CD8-positive, alpha-beta T cell (primary cell): ENCODE measurements at regions of chr3 and their contacts with region 1.

Region 1: GRCh38 chr3:160003520-160004128 is 15.0 kb downstream of the IL12A start:
- DNase-seq: peak in 4 of 9 experiments; percentile 14 to 52 (median 33)
- ATAC-seq: no peak
- H3K4me3 ChIP-seq: no peak overlapping the region
- H3K4me3 Mint-ChIP-seq: no peak overlapping the region
- H3K27ac ChIP-seq: no peak overlapping the region
- H3K27ac Mint-ChIP-seq: no peak overlapping the region
- H3K4me1 ChIP-seq: no peaks in the 10 kb centered on the region
- H3K4me1 Mint-ChIP-seq: no peaks in the 10 kb centered on the region
- H3K27me3 ChIP-seq: no peaks in the 10 kb centered on the region
- H3K27me3 Mint-ChIP-seq: no peaks in the 10 kb centered on the region
- CTCF ChIP-seq: peak; percentile 20

Region 2: DNA sequence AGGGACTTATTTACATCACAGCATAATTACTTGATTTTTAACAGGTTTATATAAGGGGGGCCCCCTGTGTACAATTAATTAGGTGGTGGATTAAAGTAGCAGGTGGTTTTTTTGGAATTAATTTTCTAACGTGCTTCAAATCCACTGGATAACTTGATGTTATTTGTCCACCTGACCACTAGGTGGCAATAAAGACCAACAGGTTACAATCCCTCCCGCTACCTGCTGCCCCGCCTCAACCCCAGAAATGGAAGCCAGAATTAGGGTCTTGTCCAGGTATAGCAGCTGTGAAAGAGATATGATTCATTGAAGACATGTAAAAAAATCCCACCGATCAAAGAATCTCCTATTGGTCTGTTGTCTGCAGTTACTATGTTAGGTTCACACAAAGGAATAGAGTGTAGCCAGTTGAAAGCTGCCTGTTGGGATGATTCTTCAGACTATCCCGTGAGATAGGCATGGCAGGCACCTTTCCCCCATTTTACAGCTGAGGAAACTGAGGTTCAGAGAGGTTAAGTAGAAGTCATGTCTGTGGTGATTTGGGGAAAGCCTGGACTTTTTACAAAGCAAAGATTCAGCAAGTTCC is 1157.8 kb before region 1 on chr3:
- CTCF ChIA-PET with region 1: no interaction called
- POLR2A ChIA-PET with region 1: no interaction called
- intact Hi-C with region 1: loop called in 1 of 2 experiments (anchors 5 kb)
- DNase-seq: peak in 5 of 9 experiments; percentile 17 to 63 (median 28)
- ATAC-seq: peak; percentile 57
- H3K4me3 ChIP-seq: no peak overlapping the region
- H3K4me3 Mint-ChIP-seq: no peak overlapping the region
- H3K27ac ChIP-seq: no peak overlapping the region
- H3K27ac Mint-ChIP-seq: no peak overlapping the region
- H3K4me1 ChIP-seq: peaks cover 4% of the 10 kb centered on the region
- H3K4me1 Mint-ChIP-seq: peaks cover 9% of the 10 kb centered on the region
- H3K27me3 ChIP-seq: no peaks in the 10 kb centered on the region
- H3K27me3 Mint-ChIP-seq: no peaks in the 10 kb centered on the region
- CTCF ChIP-seq: peak; percentile 87

Region 3: DNA sequence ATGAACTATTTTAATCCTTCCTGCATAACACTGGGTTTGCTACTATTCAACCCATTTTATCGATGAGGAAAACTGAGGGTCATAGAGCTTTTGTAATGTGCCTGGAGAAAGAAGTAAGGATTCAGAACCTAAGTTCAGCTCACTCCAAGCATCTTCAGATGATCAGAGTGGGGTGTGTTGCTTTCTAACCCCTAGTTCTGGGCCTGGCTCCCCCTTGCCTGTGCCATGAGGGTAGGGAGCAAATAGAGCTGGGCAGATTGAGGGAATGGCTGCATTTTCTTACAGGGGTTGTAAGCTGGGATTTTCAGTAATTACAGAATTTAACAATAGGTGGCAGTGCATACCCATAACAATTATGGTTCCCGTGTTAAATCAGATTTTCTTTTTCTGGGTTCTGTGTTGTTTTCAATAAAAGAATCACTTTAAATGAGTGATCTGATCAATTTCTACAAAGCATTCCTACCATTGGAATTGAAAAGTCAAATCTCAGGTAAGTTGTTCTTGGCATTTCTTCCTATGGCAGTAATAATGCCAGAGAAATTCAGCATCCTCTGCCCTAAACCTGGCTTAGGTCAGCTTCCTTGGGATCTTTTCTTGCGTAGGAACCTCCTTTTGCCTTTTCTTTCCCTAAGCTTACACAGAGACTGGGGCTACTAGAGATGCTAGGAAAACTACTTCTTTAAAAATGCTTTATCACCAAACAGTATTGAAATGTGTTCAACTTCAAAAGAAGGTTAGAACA is 118.8 kb before region 1 on chr3:
- CTCF ChIA-PET with region 1: interaction called, 4 read pairs
- POLR2A ChIA-PET with region 1: no interaction called
- intact Hi-C with region 1: loop called in 1 of 2 experiments (anchors 10 kb)
- DNase-seq: peak in 2 of 9 experiments; percentile 22 to 33
- ATAC-seq: no peak
- H3K4me3 ChIP-seq: no peak overlapping the region
- H3K4me3 Mint-ChIP-seq: no peak overlapping the region
- H3K27ac ChIP-seq: no peak overlapping the region
- H3K27ac Mint-ChIP-seq: no peak overlapping the region
- H3K4me1 ChIP-seq: no peaks in the 10 kb centered on the region
- H3K4me1 Mint-ChIP-seq: no peaks in the 10 kb centered on the region
- H3K27me3 ChIP-seq: no peaks in the 10 kb centered on the region
- H3K27me3 Mint-ChIP-seq: peaks cover 3% of the 10 kb centered on the region
- CTCF ChIP-seq: no peak

Region 4: DNA sequence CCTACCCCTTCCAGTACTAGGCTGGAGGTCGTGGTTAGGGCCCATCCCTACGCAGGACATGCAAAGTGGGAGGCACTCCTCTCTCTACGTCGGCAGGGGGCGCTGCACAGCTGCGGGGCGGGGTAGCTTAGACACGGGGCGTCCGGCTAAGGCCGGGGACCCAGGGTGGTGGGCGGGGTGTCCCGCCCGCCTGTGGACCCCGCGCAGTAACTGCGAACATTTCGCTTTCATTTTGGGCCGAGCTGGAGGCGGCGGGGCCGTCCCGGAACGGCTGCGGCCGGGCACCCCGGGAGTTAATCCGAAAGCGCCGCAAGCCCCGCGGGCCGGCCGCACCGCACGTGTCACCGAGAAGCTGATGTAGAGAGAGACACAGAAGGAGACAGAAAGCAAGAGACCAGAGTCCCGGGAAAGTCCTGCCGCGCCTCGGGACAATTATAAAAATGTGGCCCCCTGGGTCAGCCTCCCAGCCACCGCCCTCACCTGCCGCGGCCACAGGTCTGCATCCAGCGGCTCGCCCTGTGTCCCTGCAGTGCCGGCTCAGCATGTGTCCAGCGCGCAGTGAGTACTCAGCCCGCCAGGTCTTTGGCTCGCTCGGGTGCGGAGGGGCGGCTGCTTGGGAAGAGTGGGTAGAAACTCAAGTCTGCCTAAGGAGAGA is 14.9 kb before region 1 on chr3 and contains the start of gene IL12A:
- CTCF ChIA-PET with region 1: interaction called, 66 read pairs
- POLR2A ChIA-PET with region 1: interaction called, 3 read pairs
- intact Hi-C with region 1: loop called in 1 of 2 experiments (anchors 2 kb)
- DNase-seq: peak; percentile 68 to 89 (median 84)
- ATAC-seq: peak; percentile 98
- H3K4me3 ChIP-seq: peak within 1 kb of the TSS; percentile 70 to 74
- H3K4me3 Mint-ChIP-seq: peak within 1 kb of the TSS; percentile 87
- H3K27ac ChIP-seq: peak within 1 kb of the TSS; percentile 25 to 28
- H3K27ac Mint-ChIP-seq: peak within 1 kb of the TSS; percentile 27
- H3K4me1 ChIP-seq: peaks cover 15% of the 10 kb centered on the region
- H3K4me1 Mint-ChIP-seq: peaks cover 30% of the 10 kb centered on the region
- H3K27me3 ChIP-seq: no peaks in the 10 kb centered on the region
- H3K27me3 Mint-ChIP-seq: no peaks in the 10 kb centered on the region
- CTCF ChIP-seq: peak; percentile 86
- total RNA-seq, gene IL12A: 2.3 to 2.9 TPM

Region 5: GRCh38 chr3:160016972-160017371 is 13.3 kb after region 1 on chr3:
- CTCF ChIA-PET with region 1: interaction called, 10 read pairs
- POLR2A ChIA-PET with region 1: no interaction called
- intact Hi-C with region 1: no loop called
- DNase-seq: no peak
- ATAC-seq: no peak
- H3K4me3 ChIP-seq: no peak overlapping the region
- H3K4me3 Mint-ChIP-seq: no peak overlapping the region
- H3K27ac ChIP-seq: no peak overlapping the region
- H3K27ac Mint-ChIP-seq: no peak overlapping the region
- H3K4me1 ChIP-seq: no peaks in the 10 kb centered on the region
- H3K4me1 Mint-ChIP-seq: peaks cover 3% of the 10 kb centered on the region
- H3K27me3 ChIP-seq: no peaks in the 10 kb centered on the region
- H3K27me3 Mint-ChIP-seq: peaks cover 12% of the 10 kb centered on the region
- CTCF ChIP-seq: no peak

Region 6: GRCh38 chr3:161343986-161344385 is 1340.4 kb after region 1 on chr3:
- CTCF ChIA-PET with region 1: no interaction called
- POLR2A ChIA-PET with region 1: no interaction called
- intact Hi-C with region 1: no loop called
- DNase-seq: no peak
- ATAC-seq: no peak
- H3K4me3 ChIP-seq: no peak overlapping the region
- H3K4me3 Mint-ChIP-seq: no peak overlapping the region
- H3K27ac ChIP-seq: no peak overlapping the region
- H3K27ac Mint-ChIP-seq: no peak overlapping the region
- H3K4me1 ChIP-seq: peaks cover 2% of the 10 kb centered on the region
- H3K4me1 Mint-ChIP-seq: peaks cover 5% of the 10 kb centered on the region
- H3K27me3 ChIP-seq: no peaks in the 10 kb centered on the region
- H3K27me3 Mint-ChIP-seq: no peaks in the 10 kb centered on the region
- CTCF ChIP-seq: no peak